Breast epithelium (tissue), 4 donors: ENCODE measurements at regions of chr16 and their contacts with region 1.

Region 1: DNA sequence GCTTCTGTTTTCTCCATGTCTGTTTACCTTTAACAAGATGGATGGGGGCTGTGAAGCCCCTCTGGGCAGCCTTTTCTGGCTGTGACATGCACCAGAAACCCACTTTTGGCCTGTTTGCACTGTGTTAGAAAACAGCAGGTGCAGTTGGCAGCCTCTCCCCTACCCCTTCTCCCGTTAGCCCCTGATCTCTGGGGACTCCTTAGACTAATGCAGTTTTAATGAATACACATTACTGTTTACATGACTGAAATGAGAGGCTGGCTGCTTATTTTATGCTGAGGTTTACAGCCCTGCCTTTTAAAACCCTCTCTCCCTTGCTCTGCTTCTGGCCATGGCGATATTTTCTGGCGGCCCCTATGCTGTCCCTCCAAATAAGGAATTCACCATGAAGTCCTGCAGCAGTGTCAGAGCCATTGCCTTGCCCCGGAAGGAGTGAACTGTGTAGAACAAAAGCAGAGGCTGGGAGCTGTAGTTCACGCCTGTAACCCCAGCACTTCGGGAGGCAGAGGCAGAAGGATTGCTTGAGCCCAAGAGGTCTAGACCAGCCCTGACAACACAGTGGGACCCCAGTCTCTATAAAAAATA is 79.3 kb downstream of the PRKCB start:
- DNase-seq: no peak
- H3K4me3 ChIP-seq: no peak overlapping the region
- H3K27ac ChIP-seq: no peak overlapping the region
- H3K4me1 ChIP-seq: no peaks in the 10 kb centered on the region
- H3K27me3 ChIP-seq: no peaks in the 10 kb centered on the region
- CTCF ChIP-seq: no peak
- POLR2A ChIP-seq: no peak

Region 2: DNA sequence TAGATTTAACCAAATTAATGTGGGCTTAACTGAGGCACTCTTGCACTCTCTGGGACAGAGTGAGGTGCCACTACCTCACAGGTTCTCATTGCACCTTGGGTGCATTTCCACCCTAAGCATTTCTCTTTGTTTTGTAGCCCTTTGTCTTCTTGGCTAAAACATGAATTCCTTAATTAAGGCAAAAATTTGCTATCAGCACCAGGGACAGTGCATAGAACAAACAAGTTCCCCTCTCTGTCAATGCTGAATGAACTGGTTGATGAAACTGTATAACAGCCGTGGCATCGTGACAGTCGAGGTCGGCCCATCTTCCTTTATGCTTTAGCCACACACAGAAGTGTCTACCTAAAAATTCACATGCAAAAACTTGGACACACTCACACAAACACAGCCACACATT is 1026.2 kb before region 1 on chr16:
- intact Hi-C with region 1: no loop called
- DNase-seq: no peak
- H3K4me3 ChIP-seq: no peak overlapping the region
- H3K27ac ChIP-seq: no peak overlapping the region
- H3K4me1 ChIP-seq: no peaks in the 10 kb centered on the region
- H3K27me3 ChIP-seq: no peaks in the 10 kb centered on the region
- CTCF ChIP-seq: no peak
- POLR2A ChIP-seq: no peak

Region 3: DNA sequence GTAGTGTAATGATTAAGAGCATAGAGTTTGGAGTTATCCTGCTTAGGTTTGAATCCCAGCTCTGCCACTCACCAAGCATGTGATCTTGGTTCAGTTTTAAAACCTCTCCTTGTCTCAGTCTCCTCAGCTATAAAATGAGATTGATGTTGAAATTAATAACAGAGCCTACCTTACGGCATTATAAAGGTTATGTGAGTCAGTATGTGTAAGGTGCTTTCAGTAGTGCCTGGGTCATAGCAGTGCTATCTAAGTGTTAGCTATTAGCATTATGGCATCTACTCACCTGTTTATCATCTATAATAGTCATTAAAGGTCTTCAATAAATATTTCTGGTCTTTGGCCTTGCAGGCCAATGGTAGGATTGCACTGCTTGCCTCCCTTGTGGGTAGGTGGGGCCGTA is 25.8 kb before region 1 on chr16:
- intact Hi-C with region 1: no loop called
- DNase-seq: no peak
- H3K4me3 ChIP-seq: no peak overlapping the region
- H3K27ac ChIP-seq: no peak overlapping the region
- H3K4me1 ChIP-seq: no peaks in the 10 kb centered on the region
- H3K27me3 ChIP-seq: no peaks in the 10 kb centered on the region
- CTCF ChIP-seq: no peak
- POLR2A ChIP-seq: no peak

Region 4: GRCh38 chr16:23930791-23931190 is 15.8 kb after region 1 on chr16:
- intact Hi-C with region 1: loop called (anchors 2 kb)
- DNase-seq: no peak
- H3K4me3 ChIP-seq: no peak overlapping the region
- H3K27ac ChIP-seq: no peak overlapping the region
- H3K4me1 ChIP-seq: no peaks in the 10 kb centered on the region
- H3K27me3 ChIP-seq: peaks cover 0 to 4% of the 10 kb centered on the region in 2 donors
- CTCF ChIP-seq: no peak
- POLR2A ChIP-seq: no peak